GM13976 (cell line): ENCODE measurements at regions of chr15 and their contacts with region 1.

Region 1: DNA sequence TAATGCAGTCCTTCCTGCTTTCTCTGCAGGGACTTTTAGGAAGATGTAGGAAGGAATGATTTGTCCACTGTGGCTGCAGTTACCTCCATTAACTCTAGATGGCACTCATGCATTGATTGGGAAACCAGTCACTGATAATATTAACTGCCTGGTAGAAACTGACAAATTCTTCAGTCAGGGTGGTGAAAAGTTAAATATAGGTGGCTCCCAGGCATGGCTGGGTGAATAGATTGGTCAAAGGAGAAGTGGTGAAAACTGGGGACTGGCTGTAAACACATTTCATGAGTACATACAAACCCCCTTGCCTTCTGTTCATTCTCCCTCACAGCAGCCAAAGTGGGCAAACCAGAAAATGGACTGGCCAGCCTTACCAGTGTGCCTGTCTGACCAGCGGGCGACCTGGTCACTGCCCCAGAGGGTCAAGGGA is 333.4 kb downstream of the THSD4 start:
- DNase-seq: peak; percentile 45
- CTCF ChIP-seq: peak; percentile 84

Region 2: DNA sequence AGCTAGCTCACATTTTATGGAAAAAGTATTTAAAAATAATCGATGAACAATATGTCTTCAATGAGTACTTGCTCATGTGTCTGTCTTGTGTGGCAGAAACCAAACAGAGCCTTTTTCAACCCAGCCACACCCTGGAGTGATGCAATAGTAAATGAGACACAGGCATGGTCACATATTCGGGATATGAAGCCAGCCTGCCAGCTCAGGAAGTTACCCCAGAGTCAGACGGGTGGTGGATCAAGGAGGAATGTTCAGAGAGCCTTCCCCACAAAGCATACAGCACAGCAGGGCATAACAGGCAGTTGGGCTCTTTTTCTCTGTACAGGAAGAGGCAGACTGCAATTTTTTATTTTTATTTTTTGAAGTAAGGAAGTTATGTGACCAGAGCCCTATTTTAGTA is 622.1 kb before region 1 on chr15:
- in situ Hi-C with region 1: loop called (anchors 25 kb)
- DNase-seq: no peak
- CTCF ChIP-seq: no peak

Region 3: DNA sequence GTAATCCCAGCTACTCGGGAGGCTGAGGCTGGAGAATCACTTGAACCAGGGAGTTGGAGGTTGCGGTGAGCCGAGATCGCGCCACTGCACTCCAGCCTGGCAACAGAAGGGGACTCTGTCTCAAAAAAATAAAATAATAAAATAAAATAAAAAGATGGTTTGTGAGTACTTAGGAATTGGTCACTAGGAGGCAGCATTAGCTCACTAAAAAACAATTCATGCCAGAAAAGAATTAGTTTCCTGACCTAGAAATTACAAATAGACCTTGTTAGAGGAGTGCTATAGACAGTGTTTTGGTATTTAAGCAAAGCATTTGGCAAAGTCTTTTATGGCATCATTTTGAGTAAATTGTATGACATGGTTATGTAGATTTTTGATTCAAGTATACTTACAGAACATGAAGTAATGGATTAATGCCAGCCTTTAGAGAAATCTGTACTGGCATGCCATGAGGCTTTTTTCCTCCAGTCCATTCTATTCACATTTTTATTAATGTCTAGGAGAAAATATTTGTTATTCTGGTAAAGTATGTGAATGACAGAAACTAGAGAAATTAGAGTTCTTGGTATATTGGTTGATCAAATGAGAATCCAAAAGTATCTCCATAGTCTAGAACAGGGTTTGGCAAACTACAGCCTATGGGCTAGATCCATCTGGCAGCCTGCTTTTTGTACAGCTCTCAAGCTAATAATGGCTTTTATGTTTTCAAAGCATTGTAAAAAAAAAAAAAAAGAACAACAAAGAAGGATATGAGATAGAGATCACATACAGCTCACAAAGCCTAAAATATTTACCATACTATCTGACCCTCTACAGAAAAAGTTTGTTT is 474.5 kb before region 1 on chr15:
- in situ Hi-C with region 1: loop called (anchors 10 kb)
- DNase-seq: no peak
- CTCF ChIP-seq: no peak

Region 4: GRCh38 chr15:71114896-71115554 is 333.7 kb before region 1 on chr15 and contains the start of gene THSD4:
- in situ Hi-C with region 1: loop called (anchors 10 kb)
- DNase-seq: peak; percentile 92
- CTCF ChIP-seq: peak; percentile 86

Region 5: DNA sequence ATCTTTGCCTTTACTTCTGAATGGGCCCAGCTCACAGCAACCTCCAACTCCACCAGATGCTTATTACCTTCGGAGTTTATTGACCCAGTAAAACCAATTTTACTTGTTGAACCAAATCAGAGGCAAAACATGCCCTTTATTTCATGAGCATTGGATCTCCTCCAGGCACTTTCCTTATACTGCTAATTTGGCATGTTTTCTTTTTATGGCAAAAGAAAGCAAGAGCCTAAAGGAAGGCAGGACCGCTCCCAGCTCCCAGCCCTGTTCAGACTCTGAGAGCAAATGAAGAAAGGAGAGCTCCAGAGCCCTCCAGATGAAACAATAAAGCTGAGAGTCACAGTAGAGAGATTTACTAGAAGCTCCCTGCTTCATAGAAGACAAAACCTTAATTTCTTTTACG is 280.2 kb after region 1 on chr15:
- in situ Hi-C with region 1: loop called (anchors 10 kb)
- DNase-seq: no peak
- CTCF ChIP-seq: no peak